Activated CD4-positive, alpha-beta T cell treated with anti-CD3 and anti-CD28 coated beads for 36 hours (primary cell): ENCODE measurements at regions of chr2 and their contacts with region 1.

Region 1: DNA sequence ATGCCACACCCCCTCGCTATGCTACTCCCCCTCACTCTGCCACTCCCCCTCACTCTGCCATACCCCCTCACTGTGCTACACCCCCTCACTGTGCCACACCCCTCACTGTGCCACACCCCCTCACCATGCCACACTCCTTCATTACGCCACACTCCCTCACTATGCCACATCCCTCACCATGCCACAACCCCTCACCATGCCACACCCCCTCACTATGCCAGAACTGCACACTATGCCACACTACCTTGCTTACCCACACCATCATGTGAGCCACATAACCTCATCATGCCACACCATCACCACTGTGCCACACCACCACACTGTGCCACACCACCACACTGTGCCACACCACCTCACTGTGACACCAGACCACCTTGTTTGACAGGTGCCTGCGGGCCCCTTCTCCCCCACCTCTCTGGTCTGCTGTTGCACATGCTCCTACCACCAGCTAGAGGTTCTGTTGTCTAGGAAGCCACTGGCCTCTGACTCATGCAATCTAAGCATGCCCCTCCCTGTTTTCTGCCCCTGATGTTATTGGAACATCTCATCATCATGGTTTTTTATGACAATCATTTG is 22.0 kb downstream of the MARCHF4 start:
- DNase-seq: peak; percentile 61
- ATAC-seq: peak; percentile 61
- H3K4me3 Mint-ChIP-seq: no peak overlapping the region
- H3K27ac Mint-ChIP-seq: no peak overlapping the region
- H3K4me1 Mint-ChIP-seq: peaks cover 88% of the 10 kb centered on the region
- H3K27me3 Mint-ChIP-seq: no peaks in the 10 kb centered on the region

Region 2: GRCh38 chr2:216195565-216196029 is 154.7 kb before region 1 on chr2:
- CTCF ChIA-PET with region 1: no interaction called
- POLR2A ChIA-PET with region 1: interaction called, 5 read pairs
- intact Hi-C with region 1: loop called in 1 of 2 experiments (anchors 1 kb)
- DNase-seq: peak; percentile 62
- ATAC-seq: peak; percentile 96
- H3K4me3 Mint-ChIP-seq: peak overlapping the region; percentile 1
- H3K27ac Mint-ChIP-seq: peak overlapping the region; percentile 92
- H3K4me1 Mint-ChIP-seq: peaks cover 69% of the 10 kb centered on the region
- H3K27me3 Mint-ChIP-seq: no peaks in the 10 kb centered on the region

Region 3: DNA sequence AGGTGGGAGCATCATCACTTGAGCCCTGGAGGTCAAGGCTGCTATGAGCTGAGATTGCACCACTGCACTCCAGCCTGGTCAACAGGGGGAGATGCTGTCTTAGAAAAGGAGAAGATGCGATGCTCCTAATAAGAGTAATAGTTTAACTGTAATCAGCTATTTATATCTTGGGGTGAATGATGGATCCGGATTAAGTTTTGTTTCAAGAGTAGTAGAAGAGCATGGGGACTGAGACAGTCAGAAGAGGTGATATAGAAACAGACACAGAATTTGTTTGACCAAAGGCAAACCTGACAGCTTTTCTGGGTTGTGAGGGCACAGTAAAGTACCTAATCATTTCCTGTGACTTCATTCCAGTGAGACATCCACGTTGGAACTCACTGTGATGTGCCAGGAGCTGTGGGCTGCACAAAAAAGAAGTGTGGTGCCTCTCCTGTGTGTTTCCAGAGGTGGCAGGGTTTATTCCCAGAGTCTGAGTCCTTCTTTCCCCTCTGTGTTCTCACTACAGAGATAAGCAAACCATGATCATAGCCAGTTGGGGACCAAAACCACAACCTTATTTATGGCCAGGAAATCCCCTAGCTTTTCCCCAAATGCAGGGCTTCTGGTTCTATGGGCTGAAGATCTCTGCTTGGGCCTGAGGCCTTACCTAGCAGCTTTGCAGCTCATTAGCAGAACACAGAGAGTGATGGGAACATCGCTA is 127.5 kb before region 1 on chr2:
- CTCF ChIA-PET with region 1: no interaction called
- POLR2A ChIA-PET with region 1: no interaction called
- intact Hi-C with region 1: loop called in 1 of 2 experiments (anchors 5 kb)
- DNase-seq: peak; percentile 49
- ATAC-seq: peak; percentile 70
- H3K4me3 Mint-ChIP-seq: peak overlapping the region; percentile 5
- H3K27ac Mint-ChIP-seq: peak overlapping the region; percentile 83
- H3K4me1 Mint-ChIP-seq: peaks cover 33% of the 10 kb centered on the region
- H3K27me3 Mint-ChIP-seq: no peaks in the 10 kb centered on the region

Region 4: DNA sequence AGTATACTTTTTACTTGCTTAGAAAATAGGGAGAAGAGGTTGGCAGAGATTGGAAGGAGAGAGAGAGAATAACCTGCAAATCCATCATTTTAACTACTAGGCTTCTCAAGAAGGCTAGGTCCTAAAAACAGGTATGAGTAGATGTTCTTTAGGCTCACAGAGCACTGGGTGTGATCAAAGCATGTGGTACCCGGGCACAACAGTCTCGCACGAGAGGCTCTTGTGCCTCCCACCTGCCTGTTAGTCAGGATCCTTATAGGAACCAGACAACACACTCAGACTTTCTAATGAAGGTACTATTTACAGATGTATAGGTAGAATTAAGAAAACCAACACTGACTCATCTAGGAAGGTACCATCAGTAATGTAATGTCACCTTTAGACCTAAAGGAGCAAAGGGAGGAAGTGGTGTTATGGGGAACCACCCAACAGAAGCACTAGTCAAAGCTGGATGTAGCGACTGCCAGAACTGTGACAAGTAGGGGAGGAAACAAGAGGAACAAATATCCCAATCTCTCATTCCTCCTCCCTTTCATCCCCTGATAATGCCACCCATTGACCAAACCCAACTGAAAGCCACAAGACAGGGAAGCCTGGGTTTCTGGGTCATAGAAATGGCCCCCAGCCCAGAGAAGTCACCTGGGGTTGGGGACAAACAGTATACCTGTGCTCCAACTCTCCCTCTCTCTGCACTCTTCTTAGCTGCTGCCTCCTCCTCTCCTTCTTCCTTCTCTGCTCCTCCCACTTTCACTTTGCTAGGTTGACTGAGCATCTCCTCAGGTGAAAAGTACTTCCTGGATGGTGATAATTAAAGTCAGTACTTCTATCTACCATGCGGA is 38.0 kb after region 1 on chr2:
- CTCF ChIA-PET with region 1: interaction called, 7 read pairs
- POLR2A ChIA-PET with region 1: no interaction called
- intact Hi-C with region 1: loop called (anchors 2 to 5 kb)
- DNase-seq: peak; percentile 60
- ATAC-seq: peak; percentile 97
- H3K4me3 Mint-ChIP-seq: no peak overlapping the region
- H3K27ac Mint-ChIP-seq: peak overlapping the region; percentile 65
- H3K4me1 Mint-ChIP-seq: peaks cover 16% of the 10 kb centered on the region
- H3K27me3 Mint-ChIP-seq: no peaks in the 10 kb centered on the region

Region 5: GRCh38 chr2:216412022-216412999 is 62.0 kb after region 1 on chr2 and contains the start of gene SMARCAL1:
- CTCF ChIA-PET with region 1: no interaction called
- POLR2A ChIA-PET with region 1: no interaction called
- intact Hi-C with region 1: loop called in 1 of 2 experiments (anchors 1 kb)
- DNase-seq: peak; percentile 100
- ATAC-seq: peak; percentile 93
- H3K4me3 Mint-ChIP-seq: peak within 1 kb of the TSS; percentile 94
- H3K27ac Mint-ChIP-seq: peak within 1 kb of the TSS; percentile 93
- H3K4me1 Mint-ChIP-seq: peaks cover 13% of the 10 kb centered on the region
- H3K27me3 Mint-ChIP-seq: no peaks in the 10 kb centered on the region
- total RNA-seq, gene SMARCAL1: 25.9 to 27.7 TPM

Region 6: DNA sequence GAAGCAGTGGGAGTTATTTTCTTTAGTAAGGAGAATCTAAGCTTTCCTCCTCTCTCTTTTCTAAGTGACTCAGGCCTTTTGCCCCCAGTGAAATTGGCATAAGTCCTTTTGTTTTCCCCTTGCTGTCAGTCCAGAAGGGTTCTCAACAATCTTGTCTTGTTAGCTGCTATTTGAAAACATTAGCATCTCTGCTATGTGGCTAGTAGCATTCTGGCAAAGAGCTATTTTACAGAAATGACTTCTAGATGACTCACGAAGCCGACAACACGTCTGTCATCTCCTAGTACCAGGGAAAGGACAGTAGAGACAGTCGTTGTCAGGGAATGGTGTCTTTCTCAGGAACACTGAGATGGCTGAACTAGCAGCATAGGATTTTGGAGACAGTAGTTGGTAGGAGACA is 76.6 kb after region 1 on chr2:
- CTCF ChIA-PET with region 1: no interaction called
- POLR2A ChIA-PET with region 1: no interaction called
- intact Hi-C with region 1: no loop called
- DNase-seq: no peak
- ATAC-seq: no peak
- H3K4me3 Mint-ChIP-seq: no peak overlapping the region
- H3K27ac Mint-ChIP-seq: no peak overlapping the region
- H3K4me1 Mint-ChIP-seq: no peaks in the 10 kb centered on the region
- H3K27me3 Mint-ChIP-seq: no peaks in the 10 kb centered on the region

Region 7: GRCh38 chr2:216450784-216451183 is 100.5 kb after region 1 on chr2:
- CTCF ChIA-PET with region 1: no interaction called
- POLR2A ChIA-PET with region 1: no interaction called
- intact Hi-C with region 1: no loop called
- DNase-seq: no peak
- ATAC-seq: no peak
- H3K4me3 Mint-ChIP-seq: no peak overlapping the region
- H3K27ac Mint-ChIP-seq: no peak overlapping the region
- H3K4me1 Mint-ChIP-seq: no peaks in the 10 kb centered on the region
- H3K27me3 Mint-ChIP-seq: no peaks in the 10 kb centered on the region

Region 8: DNA sequence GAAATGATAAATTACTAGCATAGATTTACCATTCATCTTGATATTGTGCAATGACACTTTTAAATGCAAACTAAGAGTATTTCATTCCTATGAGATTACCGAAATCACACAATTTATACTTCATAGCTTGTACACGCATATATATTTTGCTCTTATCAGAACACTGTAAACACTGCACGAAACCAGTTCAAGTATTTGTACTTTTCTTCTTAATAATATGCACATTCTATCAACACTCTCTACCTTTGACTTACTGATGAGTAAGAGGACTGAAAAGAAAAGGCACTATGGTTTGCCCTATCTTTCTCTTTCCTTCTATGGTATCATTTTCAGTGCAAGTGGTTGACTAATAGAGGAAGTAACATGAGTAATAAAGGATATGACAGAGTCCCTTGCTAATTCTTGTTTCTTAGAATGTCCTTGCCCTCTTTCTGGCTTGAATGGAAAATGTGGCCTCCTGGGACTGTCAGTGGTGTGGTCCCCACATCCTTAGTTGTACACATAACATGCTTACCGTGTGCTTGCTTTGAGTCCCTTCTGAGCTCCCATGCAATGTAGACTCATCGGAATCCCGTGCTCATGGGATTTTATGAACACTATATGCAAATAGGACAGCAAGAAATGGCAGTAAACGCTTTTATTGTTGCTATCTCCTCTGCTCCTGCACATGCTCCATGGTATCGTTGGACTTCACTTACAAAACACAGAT is 873.1 kb after region 1 on chr2:
- CTCF ChIA-PET with region 1: no interaction called
- POLR2A ChIA-PET with region 1: no interaction called
- intact Hi-C with region 1: loop called in 1 of 2 experiments (anchors 2 kb)
- DNase-seq: peak; percentile 82
- ATAC-seq: peak; percentile 92
- H3K4me3 Mint-ChIP-seq: peak overlapping the region; percentile 44
- H3K27ac Mint-ChIP-seq: peak overlapping the region; percentile 86
- H3K4me1 Mint-ChIP-seq: peaks cover 31% of the 10 kb centered on the region
- H3K27me3 Mint-ChIP-seq: peaks cover 10% of the 10 kb centered on the region